AG04449 (cell line): ENCODE measurements at regions of chr3 and their contacts with region 1.

Region 1: GRCh38 chr3:157447026-157447694 is 10.5 kb downstream of the PTX3 start:
- DNase-seq: no peak
- H3K4me3 ChIP-seq: no peak overlapping the region
- CTCF ChIP-seq: peak; percentile 69

Region 2: GRCh38 chr3:157460253-157460652 is 13.1 kb after region 1 on chr3:
- CTCF ChIA-PET with region 1: interaction called, 17 read pairs
- POLR2A ChIA-PET with region 1: interaction called, 3 read pairs
- DNase-seq: no peak
- H3K4me3 ChIP-seq: no peak overlapping the region
- CTCF ChIP-seq: no peak